SK-N-SH (cell line): ENCODE measurements at regions of chr2 and their contacts with region 1.

Region 1: GRCh38 chr2:191555092-191555742 is 122.7 kb upstream of the NABP1 start:
- DNase-seq: peak; percentile 72
- H3K4me3 ChIP-seq: peak overlapping the region in 1 of 2 experiments; percentile 39; a peak in 1 of 4 replicates
- H3K27ac ChIP-seq: no peak overlapping the region
- H3K4me1 ChIP-seq: peaks cover 0 to 3% of the 10 kb centered on the region in 2 experiments; a peak in 1 of 4 replicates
- H3K27me3 ChIP-seq: no peaks in the 10 kb centered on the region
- CTCF ChIP-seq: peak; percentile 87
- EP300 ChIP-seq: no peak
- RAD21 ChIP-seq: peak; percentile 89

Region 2: DNA sequence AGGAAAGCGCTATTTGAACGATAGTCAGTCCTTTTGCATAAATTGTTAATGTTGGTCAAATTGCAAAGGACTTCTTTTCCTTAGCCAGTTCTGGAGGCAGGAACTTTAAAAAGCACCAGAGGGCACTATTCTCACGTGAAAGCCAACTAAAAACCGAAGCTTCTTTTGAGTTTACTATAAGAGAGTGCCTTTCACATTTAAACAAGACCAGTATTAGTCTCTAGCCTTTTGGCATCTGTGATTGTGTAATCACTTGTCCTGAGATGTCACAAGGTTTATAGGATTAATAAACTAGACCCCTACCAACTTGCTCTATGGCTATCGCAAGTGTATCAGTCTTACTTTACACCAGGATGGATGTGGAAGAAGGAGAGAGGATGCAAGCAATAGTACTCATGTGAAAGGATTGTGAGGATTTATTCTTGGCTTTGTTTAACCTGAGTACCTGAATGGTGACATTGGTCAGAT is 390.0 kb before region 1 on chr2:
- CTCF ChIA-PET with region 1: interaction called, 10 read pairs
- POLR2A ChIA-PET with region 1: no interaction called
- DNase-seq: peak; percentile 44
- H3K4me3 ChIP-seq: peak overlapping the region in 1 of 2 experiments; percentile 22; a peak in 1 of 4 replicates
- H3K27ac ChIP-seq: peak overlapping the region in 1 of 2 experiments; percentile 50; a peak in 1 of 4 replicates
- H3K4me1 ChIP-seq: peaks cover 8 to 20% of the 10 kb centered on the region in 2 experiments
- H3K27me3 ChIP-seq: no peaks in the 10 kb centered on the region
- CTCF ChIP-seq: peak; percentile 69
- EP300 ChIP-seq: no peak
- RAD21 ChIP-seq: peak; percentile 91

Region 3: GRCh38 chr2:191544461-191545062 is 10.7 kb before region 1 on chr2:
- CTCF ChIA-PET with region 1: interaction called, 46 read pairs
- POLR2A ChIA-PET with region 1: no interaction called
- DNase-seq: no peak
- H3K4me3 ChIP-seq: no peak overlapping the region
- H3K27ac ChIP-seq: no peak overlapping the region
- H3K4me1 ChIP-seq: peaks cover 0 to 4% of the 10 kb centered on the region in 2 experiments; a peak in 2 of 4 replicates
- H3K27me3 ChIP-seq: no peaks in the 10 kb centered on the region
- CTCF ChIP-seq: no peak
- EP300 ChIP-seq: no peak
- RAD21 ChIP-seq: no peak

Region 4: DNA sequence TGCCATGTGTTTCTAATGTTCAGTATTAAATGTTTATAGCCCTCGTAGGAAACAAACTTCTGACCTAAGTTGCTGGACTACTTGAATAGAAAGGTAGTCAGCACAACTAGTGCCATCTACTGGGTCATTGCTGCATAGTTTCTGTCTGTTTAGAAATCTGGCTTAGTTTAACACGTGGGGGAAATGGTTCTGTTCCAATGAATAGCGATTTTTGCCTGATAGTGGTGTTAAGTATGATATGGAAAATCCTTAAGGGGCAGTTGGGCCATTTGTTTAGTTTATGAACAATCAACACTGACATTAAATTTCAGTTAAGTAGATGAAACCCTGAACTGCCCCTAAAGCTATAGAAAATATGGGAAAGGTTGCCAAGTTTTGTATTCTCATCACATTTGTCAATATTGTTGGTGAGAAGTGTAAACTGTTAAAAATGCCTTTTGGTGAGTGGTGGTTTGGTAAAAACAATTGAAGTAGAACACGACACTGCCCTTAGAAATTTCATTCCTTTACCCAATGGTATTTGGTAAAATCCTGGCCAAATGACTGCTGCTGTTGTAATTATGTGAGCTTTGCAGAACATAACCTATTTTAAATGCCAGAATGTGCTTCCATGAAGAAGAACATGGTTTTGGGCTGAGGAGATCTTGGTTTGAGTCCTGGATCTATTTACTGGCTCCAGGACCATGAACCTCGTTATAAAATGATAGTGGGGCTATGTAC is 136.0 kb after region 1 on chr2:
- CTCF ChIA-PET with region 1: interaction called, 20 read pairs
- POLR2A ChIA-PET with region 1: no interaction called
- DNase-seq: peak; percentile 62
- H3K4me3 ChIP-seq: no peak overlapping the region; a peak in 1 of 4 replicates
- H3K27ac ChIP-seq: peak overlapping the region in 1 of 2 experiments; percentile 38; a peak in 1 of 4 replicates
- H3K4me1 ChIP-seq: peaks cover 4 to 22% of the 10 kb centered on the region in 2 experiments; a peak in 3 of 4 replicates
- H3K27me3 ChIP-seq: no peaks in the 10 kb centered on the region
- CTCF ChIP-seq: peak; percentile 82
- EP300 ChIP-seq: peak in 1 of 2 experiments; percentile 51; a peak in 1 of 4 replicates
- RAD21 ChIP-seq: peak; percentile 78

Region 5: GRCh38 chr2:192162392-192163042 is 607.3 kb after region 1 on chr2:
- CTCF ChIA-PET with region 1: interaction called, 39 read pairs
- POLR2A ChIA-PET with region 1: no interaction called
- DNase-seq: peak; percentile 12
- H3K4me3 ChIP-seq: no peak overlapping the region; a peak in 1 of 4 replicates
- H3K27ac ChIP-seq: no peak overlapping the region
- H3K4me1 ChIP-seq: no peaks in the 10 kb centered on the region
- H3K27me3 ChIP-seq: no peaks in the 10 kb centered on the region
- CTCF ChIP-seq: peak; percentile 99
- EP300 ChIP-seq: no peak
- RAD21 ChIP-seq: peak; percentile 95